ENCODE measurements at regions of chr2 and their contacts with region 1.

Region 1: DNA sequence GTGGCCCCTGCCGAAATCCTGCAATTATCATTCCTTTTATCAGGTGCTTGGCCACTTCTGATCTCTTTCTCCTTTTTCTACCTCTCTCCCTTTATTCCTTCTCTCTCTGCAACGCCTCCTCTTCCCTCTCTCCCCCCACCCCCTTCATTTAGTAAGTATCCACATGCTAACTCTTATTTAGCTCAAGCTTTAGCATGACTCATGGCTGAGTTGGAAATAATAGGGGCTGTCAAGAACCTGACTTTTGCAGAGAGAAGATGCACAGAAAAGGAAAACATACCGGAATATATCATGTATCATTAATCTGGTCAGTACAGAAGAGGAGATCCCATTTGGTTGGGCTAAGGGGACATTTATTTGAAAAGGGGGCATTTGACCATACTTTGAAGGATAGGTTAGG is 33.1 kb downstream of the FAM171B start:
- DNase-seq: no peak
- H3K4me3 ChIP-seq: no peak overlapping the region
- H3K27me3 ChIP-seq: no peaks in the 10 kb centered on the region
- CTCF ChIP-seq: no peak

Region 2: DNA sequence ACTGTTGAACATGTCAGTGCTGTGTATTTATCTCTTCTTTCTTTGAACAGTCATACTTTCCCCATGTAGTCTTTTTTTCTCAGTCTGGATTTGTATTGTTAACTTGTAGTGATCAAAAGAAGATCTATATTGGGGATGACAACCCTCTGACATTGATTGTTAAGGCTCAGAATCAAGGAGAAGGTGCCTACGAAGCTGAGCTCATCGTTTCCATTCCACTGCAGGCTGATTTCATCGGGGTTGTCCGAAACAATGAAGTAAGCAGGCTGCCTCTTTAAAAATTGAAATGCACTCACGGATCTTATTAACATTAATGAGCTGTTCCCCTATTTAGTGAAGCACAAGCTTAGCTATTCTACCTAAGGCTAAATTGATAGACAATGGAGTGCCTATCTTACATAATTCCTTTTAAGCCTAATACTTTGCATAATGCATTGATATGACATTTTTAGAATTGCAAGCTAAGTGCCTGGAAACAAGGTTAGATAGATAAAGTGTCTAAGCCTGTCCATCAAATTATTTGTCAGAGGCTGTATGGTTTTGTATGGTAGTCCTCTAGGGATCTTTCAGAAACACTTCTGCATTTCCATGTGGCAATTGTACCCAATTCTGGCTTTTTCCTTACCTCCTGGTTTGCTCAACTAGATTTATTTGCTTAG is 62.4 kb before region 1 on chr2:
- CTCF ChIA-PET with region 1: no interaction called
- POLR2A ChIA-PET with region 1: no interaction called
- DNase-seq: no peak
- H3K4me3 ChIP-seq: no peak overlapping the region
- H3K27me3 ChIP-seq: no peaks in the 10 kb centered on the region
- CTCF ChIP-seq: no peak

Region 3: DNA sequence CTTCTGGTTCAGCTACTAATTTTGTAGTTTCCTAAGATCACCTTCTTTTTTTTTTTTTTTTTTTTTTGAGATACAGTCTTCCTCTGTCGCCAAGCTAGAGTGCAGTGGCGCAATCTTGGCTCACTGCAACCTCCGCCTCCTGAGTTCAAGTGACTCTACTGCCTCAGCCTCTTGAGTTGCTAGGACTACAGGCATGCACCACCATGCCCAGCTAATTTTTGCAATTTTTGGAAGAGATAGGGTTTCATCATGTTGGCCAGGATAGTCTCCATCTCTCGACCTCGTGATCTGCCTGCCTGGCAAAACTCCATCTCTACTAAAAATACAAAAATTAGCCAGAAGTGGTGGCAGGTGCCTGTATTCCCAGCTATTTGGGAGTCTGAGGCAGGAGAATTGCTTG is 1128.8 kb after region 1 on chr2:
- CTCF ChIA-PET with region 1: no interaction called
- POLR2A ChIA-PET with region 1: interaction called, 17 read pairs
- DNase-seq: no peak
- H3K4me3 ChIP-seq: no peak overlapping the region
- H3K27me3 ChIP-seq: no peaks in the 10 kb centered on the region
- CTCF ChIP-seq: no peak